Panc1 (cell line): ENCODE measurements at regions of chr15 and their contacts with region 1.

Region 1: GRCh38 chr15:99241752-99242151 is 7.6 kb downstream of the TTC23 start:
- DNase-seq: no peak
- ATAC-seq: no peak
- H3K4me3 ChIP-seq: no peak overlapping the region
- H3K27ac ChIP-seq: no peak overlapping the region
- H3K4me1 ChIP-seq: no peaks in the 10 kb centered on the region
- H3K27me3 ChIP-seq: no peaks in the 10 kb centered on the region
- CTCF ChIP-seq: no peak

Region 2: DNA sequence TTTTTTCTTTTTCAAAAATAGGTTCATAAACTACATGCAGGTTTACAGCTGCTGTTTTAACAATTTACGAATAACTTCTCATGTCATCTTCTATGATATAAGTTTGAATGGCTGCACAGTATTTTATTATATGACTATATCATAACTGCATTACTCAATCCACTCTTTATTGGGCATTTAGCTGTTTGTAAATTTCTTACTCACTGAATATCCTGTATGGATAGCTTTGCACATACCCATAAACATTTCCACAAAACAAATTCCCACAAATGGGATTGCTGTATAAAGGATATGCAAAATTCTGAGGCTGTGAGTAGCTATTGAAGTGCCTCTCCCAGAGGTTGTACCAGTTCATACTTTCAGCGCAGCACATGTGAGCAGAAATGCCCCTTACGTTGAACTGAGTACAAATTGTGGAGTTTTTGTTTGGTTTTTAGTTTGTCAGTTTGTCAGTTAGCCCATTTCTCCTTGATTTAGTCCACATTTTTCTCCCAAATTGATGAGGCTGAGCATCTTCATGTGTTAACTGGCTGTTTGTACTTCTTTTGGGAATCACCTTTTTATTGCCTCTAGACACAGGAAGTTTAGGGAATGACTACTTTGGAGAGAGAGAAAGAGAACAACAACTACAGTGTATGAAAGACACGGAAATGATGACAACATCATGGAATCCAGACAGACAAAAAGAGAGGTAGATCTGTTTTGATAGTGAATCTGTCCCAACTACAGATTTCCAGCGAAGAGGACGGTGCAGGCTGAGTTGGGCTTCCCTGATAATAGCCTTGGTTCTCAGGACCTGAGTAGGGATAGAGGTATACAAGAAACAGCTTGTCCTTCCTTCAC is 17.2 kb before region 1 on chr15:
- CTCF ChIA-PET with region 1: no interaction called
- POLR2A ChIA-PET with region 1: no interaction called
- in situ Hi-C with region 1: no loop called
- intact Hi-C with region 1: no loop called
- DNase-seq: no peak
- ATAC-seq: no peak
- H3K4me3 ChIP-seq: no peak overlapping the region
- H3K27ac ChIP-seq: no peak overlapping the region
- H3K4me1 ChIP-seq: no peaks in the 10 kb centered on the region
- H3K27me3 ChIP-seq: no peaks in the 10 kb centered on the region
- CTCF ChIP-seq: no peak

Region 3: GRCh38 chr15:99264125-99264524 is 22.4 kb after region 1 on chr15:
- CTCF ChIA-PET with region 1: no interaction called
- POLR2A ChIA-PET with region 1: interaction called, 16 read pairs
- in situ Hi-C with region 1: no loop called
- intact Hi-C with region 1: no loop called
- DNase-seq: no peak
- ATAC-seq: no peak
- H3K4me3 ChIP-seq: no peak overlapping the region
- H3K27ac ChIP-seq: no peak overlapping the region
- H3K4me1 ChIP-seq: 0 out of 2 replicates have a peak, but pooled peaks cover 4% of the 10 kb centered on the region
- H3K27me3 ChIP-seq: no peaks in the 10 kb centered on the region
- CTCF ChIP-seq: no peak